ENCODE measurements at regions of chr14 and their contacts with region 1.

Region 1: GRCh38 chr14:90522571-90523191 is 125.9 kb downstream of the CALM1 start:
- DNase-seq: no peak

Region 2: GRCh38 chr14:90455100-90455571 is 67.5 kb before region 1 on chr14:
- intact Hi-C with region 1: no loop called
- DNase-seq: no peak

Region 3: DNA sequence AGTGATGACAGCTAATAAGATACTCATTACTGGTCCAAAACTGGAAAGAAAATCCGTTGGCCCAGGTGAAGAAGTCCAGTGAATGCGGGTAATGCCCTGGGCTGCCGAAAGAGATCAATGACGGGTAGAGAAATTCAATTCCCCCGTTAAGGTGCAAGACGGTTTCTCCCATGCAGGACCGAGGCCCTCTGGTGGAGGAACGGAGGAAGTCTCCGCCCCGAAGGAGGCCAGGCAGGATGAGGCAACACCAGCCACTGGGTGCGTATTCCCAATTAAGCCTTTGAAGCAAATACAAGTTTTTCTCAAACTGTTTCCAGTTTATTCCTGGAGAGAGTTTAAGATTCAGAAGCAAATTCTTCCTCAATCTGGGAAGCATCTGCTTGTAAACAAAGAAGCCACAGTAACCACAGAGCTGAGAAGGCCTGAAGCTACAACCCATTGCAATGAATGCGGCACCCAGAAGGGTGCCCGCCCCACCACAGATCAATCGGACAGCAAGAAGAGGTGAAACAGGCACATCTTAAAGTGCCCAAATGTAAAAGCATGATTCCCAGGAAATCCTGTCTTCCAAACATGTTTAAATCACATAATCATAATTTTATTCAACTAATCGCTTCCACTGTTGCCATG is 175.0 kb after region 1 on chr14:
- intact Hi-C with region 1: loop called (anchors 5 kb)
- DNase-seq: peak; percentile 93